A549 (cell line): ENCODE measurements at regions of chr19 and their contacts with region 1.

Region 1: GRCh38 chr19:49106648-49107135 is 7.5 kb upstream of the LIN7B start:
- DNase-seq: peak; percentile 69 to 87
- ATAC-seq: peak; percentile 63 to 80
- H3K4me3 ChIP-seq: no peak overlapping the region
- H3K27ac ChIP-seq: peak overlapping the region in 1 of 2 experiments; percentile 51; a peak in 4 of 6 replicates
- H3K4me1 ChIP-seq: peaks cover 18% of the 10 kb centered on the region
- CTCF ChIP-seq: peak; percentile 93
- EP300 ChIP-seq: no peak
- POLR2A ChIP-seq: no peak
- RAD21 ChIP-seq: peak; percentile 40 to 45; a peak in 4 of 5 replicates

Region 2: GRCh38 chr19:49118565-49119410 is 12.1 kb after region 1 on chr19 and contains the start of gene C19orf73:
- CTCF ChIA-PET with region 1: interaction called, 241 read pairs
- POLR2A ChIA-PET with region 1: interaction called, 3 read pairs
- DNase-seq: peak; percentile 94 to 98
- ATAC-seq: peak; percentile 65 to 87
- H3K4me3 ChIP-seq: peak within 1 kb of the TSS; percentile 62
- H3K27ac ChIP-seq: peak within 1 kb of the TSS; percentile 95
- H3K4me1 ChIP-seq: peaks cover 20% of the 10 kb centered on the region
- CTCF ChIP-seq: no peak
- EP300 ChIP-seq: no peak
- POLR2A ChIP-seq: peak; percentile 64
- RAD21 ChIP-seq: no peak
- polyA plus RNA-seq, gene C19orf73: 1.4 and 1.8 TPM in 2 replicates

Region 3: DNA sequence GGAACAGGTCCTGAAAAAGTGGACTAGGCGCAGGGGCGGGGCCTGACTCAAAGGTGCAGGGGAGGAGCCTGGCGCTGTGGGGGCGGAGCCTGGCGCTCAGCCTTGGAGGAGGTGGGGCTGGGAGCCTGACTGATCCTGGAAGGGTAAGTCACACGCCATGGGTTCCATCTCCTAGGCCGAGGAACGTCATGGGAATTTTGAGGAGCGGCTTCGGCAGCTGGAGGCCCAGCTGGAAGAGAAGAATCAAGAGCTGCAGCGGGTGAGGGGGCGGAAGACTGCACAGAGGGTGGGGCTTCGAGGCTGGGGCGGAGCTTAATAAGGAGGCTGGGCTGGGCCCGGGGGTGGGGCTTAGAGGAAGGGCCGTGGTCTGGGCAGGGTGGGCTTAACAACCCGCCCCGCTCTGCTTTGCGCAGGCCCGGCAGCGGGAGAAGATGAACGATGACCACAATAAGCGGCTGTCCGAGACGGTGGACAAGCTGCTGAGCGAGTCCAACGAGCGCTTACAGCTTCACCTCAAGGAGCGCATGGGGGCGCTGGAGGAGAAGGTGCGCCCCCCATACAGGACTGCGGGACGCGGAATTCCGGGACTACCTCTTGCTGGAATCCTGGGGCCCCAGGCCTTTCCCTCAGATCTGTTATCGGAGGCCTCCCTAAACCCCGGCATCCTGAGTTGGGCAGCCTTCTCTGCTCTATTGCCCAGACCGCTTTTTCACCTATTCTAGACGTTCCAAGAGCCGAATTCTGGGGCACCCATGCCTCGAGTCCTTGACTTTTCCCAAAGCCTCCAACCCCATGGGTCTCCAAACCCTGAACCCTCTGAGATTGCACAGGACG is 27.1 kb after region 1 on chr19:
- CTCF ChIA-PET with region 1: interaction called, 15 read pairs
- POLR2A ChIA-PET with region 1: no interaction called
- DNase-seq: peak; percentile 72 to 73
- ATAC-seq: peak; percentile 58 to 76
- H3K4me3 ChIP-seq: peak overlapping the region; percentile 17
- H3K27ac ChIP-seq: peak overlapping the region; percentile 6 to 54; a peak in 3 of 6 replicates
- H3K4me1 ChIP-seq: no peaks in the 10 kb centered on the region
- CTCF ChIP-seq: no peak
- EP300 ChIP-seq: no peak
- POLR2A ChIP-seq: no peak
- RAD21 ChIP-seq: no peak

Region 4: GRCh38 chr19:49188626-49189200 is 82.0 kb after region 1 on chr19:
- CTCF ChIA-PET with region 1: interaction called, 10 read pairs
- POLR2A ChIA-PET with region 1: no interaction called
- DNase-seq: no peak
- ATAC-seq: no peak
- H3K4me3 ChIP-seq: no peak overlapping the region
- H3K27ac ChIP-seq: no peak overlapping the region
- H3K4me1 ChIP-seq: no peaks in the 10 kb centered on the region
- CTCF ChIP-seq: no peak
- EP300 ChIP-seq: no peak
- POLR2A ChIP-seq: no peak
- RAD21 ChIP-seq: no peak